Posterior cingulate gyrus (tissue), 11 donors: ENCODE measurements at regions of chr11 and their contacts with region 1.

Region 1: DNA sequence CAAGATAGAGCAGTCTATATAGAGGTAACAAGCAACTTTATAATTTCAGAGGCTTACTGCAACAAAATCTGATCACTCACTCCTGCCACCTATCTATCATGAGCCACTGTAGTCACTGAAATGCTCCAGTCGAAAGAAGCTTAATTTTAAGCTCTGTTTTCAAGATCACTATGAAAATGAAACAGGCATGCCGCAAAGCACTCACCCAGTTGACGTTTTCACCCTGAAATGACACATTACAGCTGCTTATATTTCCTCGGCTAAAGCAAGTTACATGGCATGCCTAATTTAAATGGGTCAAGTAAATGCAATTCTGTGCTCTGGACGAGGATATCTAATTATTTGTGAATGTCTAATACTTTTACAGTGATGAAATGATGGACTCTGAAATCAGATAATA is 616.3 kb downstream of the FAM181B start:
- DNase-seq: no peak

Region 2: DNA sequence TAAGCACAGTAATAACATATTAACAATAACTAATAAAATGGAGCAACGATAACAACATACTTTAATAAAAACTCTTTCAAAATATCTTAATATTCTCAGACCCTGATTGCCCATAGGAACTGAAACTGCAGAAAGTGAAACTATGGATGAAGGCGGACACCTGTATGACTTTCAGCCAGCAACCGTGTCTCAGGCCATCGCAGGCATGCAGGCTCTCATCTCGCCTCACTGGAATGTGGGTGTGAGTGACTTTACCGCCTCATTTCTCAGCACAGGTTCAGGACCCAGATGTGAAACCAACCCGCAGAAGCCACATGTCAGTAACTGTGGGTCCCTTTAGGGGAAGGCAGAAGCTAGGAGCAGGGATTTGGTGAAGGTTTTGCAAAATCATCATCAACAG is 77.2 kb after region 1 on chr11:
- intact Hi-C with region 1: loop called (anchors 10 kb)
- DNase-seq: no peak